Natural killer cell (primary cell): ENCODE measurements at regions of chr11 and their contacts with region 1.

Region 1: GRCh38 chr11:32583459-32584271 is at the start of gene EIF3M:
- DNase-seq: peak; percentile 93 to 98
- ATAC-seq: peak; percentile 98 to 99 (median 98)
- H3K4me3 ChIP-seq: peak within 1 kb of the TSS; percentile 89
- H3K4me3 Mint-ChIP-seq: peak within 1 kb of the TSS; percentile 98
- H3K27ac ChIP-seq: peak within 1 kb of the TSS; percentile 75
- H3K27ac Mint-ChIP-seq: peak within 1 kb of the TSS; percentile 94 to 98
- H3K4me1 ChIP-seq: peaks cover 12% of the 10 kb centered on the region
- H3K4me1 Mint-ChIP-seq: peaks cover 33 to 45% of the 10 kb centered on the region in 2 donors
- H3K27me3 ChIP-seq: no peaks in the 10 kb centered on the region
- H3K27me3 Mint-ChIP-seq: no peaks in the 10 kb centered on the region
- CTCF ChIP-seq: no peak
- total RNA-seq, gene EIF3M: 146 to 165 (median 155) TPM

Region 2: DNA sequence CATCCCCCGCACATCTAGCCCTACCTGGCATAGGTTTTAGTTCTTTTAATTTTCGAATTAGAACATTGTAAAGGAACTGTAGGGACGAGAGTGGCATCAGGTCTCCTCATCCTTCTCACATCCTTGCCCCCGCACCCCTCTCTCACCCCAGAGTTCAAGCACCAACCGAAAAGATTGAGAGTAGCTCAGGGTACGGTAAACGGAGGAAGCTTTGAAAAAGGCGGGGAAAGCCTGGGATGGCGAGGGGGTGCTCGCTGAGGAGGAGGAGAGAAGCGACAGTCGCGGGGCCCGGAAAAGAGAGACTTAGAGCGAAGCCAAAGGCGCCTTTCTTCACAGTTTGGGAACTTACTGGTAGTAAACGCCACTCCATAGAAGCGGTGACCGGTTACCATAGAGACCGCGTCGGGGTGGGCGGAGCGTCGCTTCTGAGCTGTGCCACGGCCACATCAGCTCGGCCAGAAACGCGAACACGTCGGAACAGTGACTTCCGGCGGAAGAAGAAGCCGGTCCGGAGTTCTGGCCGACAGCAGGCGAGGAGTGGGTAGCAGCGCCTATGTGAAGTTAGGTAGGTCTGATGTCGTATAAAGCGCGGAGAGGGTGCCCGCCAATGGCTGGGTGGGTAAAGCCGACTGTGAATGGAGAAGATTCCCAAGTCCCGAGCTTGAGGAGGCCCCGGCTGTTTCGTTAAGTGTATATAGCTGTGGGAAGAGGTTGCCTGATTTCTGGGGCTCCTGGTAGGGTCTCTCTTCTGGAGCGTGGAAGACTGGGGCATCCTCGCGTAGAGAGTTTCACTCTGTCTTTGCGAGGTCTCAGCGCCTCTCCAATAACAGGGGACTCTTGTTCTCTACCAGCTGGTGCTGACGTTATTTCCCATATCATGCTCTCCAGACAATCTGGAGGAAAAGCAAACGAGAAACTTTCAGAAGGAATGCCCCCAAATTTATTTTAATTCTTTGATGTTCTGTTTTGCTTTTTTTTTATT is 1214.0 kb before region 1 on chr11 and contains the starts of genes DCDC1 and DNAJC24:
- intact Hi-C with region 1: loop called (anchors 5 kb)
- DNase-seq: peak; percentile 90 to 97
- ATAC-seq: peak; percentile 98 to 99 (median 99)
- H3K4me3 ChIP-seq: peak within 1 kb of the TSS; percentile 90
- H3K4me3 Mint-ChIP-seq: peak within 1 kb of the TSS; percentile 100
- H3K27ac ChIP-seq: peak within 1 kb of the TSS; percentile 82
- H3K27ac Mint-ChIP-seq: peak within 1 kb of the TSS; percentile 95 to 97
- H3K4me1 ChIP-seq: peaks cover 13% of the 10 kb centered on the region
- H3K4me1 Mint-ChIP-seq: peaks cover 26 to 43% of the 10 kb centered on the region in 2 donors
- H3K27me3 ChIP-seq: peaks cover 10% of the 10 kb centered on the region
- H3K27me3 Mint-ChIP-seq: peaks cover 19 to 30% of the 10 kb centered on the region in 2 donors
- CTCF ChIP-seq: no peak
- total RNA-seq, gene DCDC1: not detected
- total RNA-seq, gene DNAJC24: 14.9 to 22.7 (median 18.6) TPM